CD8-positive, alpha-beta T cell (primary cell): ENCODE measurements at regions of chr17 and their contacts with region 1.

Region 1: DNA sequence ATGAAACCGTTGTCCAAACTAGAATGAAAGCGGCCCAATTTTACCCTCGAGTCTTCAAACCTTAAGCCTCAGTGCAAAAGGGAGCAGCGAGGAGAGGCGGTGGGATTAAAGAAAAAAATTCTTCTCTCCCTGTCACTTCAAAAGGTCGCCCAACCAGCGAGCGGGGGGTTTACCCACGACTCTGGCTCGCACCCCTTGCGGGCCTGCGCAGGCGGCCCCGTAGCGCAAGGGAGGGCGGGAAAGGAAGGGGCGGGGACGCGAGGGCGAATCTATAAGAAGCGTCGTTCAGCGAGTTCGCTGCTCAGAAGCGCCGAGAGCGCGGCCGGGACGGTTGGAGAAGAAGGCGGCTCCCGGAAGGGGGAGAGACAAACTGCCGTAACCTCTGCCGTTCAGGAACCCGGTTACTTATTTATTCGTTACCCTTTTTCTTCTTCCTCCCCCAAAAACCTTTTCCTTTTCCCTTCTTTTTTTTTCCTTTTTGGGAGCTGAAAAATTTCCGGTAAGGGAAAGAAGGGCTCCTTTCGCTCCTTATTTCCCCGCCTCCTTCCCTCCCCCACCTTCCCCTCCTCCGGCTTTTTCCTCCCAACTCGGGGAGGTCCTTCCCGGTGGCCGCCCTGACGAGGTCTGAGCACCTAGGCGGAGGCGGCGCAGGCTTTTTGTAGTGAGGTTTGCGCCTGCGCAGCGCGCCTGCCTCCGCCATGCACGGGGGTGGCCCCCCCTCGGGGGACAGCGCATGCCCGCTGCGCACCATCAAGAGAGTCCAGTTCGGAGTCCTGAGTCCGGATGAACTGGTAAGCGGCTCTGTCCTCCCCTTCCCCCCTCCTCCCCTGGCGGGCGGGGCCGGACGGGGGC is at the start of gene POLR2A:
- DNase-seq: peak; percentile 96 to 99 (median 98)
- ATAC-seq: peak; percentile 66
- H3K4me3 ChIP-seq: peak within 1 kb of the TSS; percentile 95 to 98
- H3K4me3 Mint-ChIP-seq: peak within 1 kb of the TSS; percentile 100
- H3K27ac ChIP-seq: peak within 1 kb of the TSS; percentile 99 to 100
- H3K27ac Mint-ChIP-seq: peak within 1 kb of the TSS; percentile 100
- H3K4me1 ChIP-seq: peaks cover 58% of the 10 kb centered on the region
- H3K4me1 Mint-ChIP-seq: peaks cover 74% of the 10 kb centered on the region
- H3K27me3 ChIP-seq: no peaks in the 10 kb centered on the region
- H3K27me3 Mint-ChIP-seq: no peaks in the 10 kb centered on the region
- CTCF ChIP-seq: no peak
- total RNA-seq, gene POLR2A: 508 to 546 TPM

Region 2: GRCh38 chr17:7239091-7240027 is 244.9 kb before region 1 on chr17 and contains the start of gene PHF23:
- CTCF ChIA-PET with region 1: no interaction called
- POLR2A ChIA-PET with region 1: interaction called, 10 read pairs
- intact Hi-C with region 1: loop called in 1 of 2 experiments (anchors 2 kb)
- DNase-seq: peak; percentile 93 to 99 (median 97)
- ATAC-seq: peak; percentile 64
- H3K4me3 ChIP-seq: peak within 1 kb of the TSS; percentile 87 to 90
- H3K4me3 Mint-ChIP-seq: peak within 1 kb of the TSS; percentile 98
- H3K27ac ChIP-seq: peak within 1 kb of the TSS; percentile 64 to 100
- H3K27ac Mint-ChIP-seq: peak within 1 kb of the TSS; percentile 90
- H3K4me1 ChIP-seq: peaks cover 37% of the 10 kb centered on the region
- H3K4me1 Mint-ChIP-seq: peaks cover 58% of the 10 kb centered on the region
- H3K27me3 ChIP-seq: no peaks in the 10 kb centered on the region
- H3K27me3 Mint-ChIP-seq: no peaks in the 10 kb centered on the region
- CTCF ChIP-seq: no peak
- total RNA-seq, gene PHF23: 2.8 to 3.1 TPM

Region 3: DNA sequence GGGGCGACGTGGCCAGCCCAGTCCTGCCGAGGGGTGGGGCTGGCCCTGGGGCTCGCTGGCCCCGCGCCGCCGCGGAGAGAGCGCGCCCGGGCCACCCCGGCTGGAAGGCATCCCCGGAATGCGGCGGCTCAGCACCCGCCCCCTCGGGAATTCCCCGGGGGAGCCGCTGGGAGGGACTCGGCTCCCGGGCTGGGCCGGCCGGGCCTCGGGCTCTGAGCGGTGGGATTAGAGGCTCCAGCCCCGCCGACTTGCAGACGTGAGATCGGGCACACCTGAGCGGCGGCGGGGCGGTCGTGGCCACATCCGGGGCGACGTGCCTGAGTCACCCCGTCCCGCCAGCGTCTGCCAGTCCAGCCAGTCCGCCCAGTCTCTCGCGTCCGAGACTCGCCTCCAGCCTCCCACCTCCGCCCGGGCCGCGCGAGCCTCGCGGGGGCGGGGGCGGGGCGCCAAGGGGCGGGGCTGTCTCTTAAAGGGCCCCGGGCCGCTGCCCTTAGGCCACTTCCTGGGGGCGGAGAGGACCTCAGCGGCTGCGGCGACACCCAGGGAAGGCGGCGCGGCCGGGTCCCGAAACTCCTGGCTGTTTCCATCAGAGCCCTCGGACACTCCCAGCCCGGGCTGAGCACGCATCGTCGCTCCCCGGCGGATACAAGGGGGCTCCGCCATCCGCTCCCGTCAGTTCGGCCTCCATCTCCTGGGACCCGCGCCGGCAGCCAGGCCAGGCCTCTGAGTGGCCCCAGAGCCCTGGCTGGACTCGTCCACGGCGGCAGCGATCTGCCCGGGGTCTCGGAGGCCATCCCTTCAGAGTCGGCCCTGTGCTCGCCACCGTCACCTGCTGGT is 132.4 kb before region 1 on chr17 and contains the start of gene KCTD11:
- CTCF ChIA-PET with region 1: interaction called, 12 read pairs
- POLR2A ChIA-PET with region 1: interaction called, 5 read pairs
- intact Hi-C with region 1: loop called (anchors 1 to 5 kb)
- DNase-seq: peak in 8 of 9 experiments; percentile 64 to 90 (median 80)
- ATAC-seq: peak; percentile 48
- H3K4me3 ChIP-seq: peak within 1 kb of the TSS; percentile 62 to 73
- H3K4me3 Mint-ChIP-seq: peak within 1 kb of the TSS; percentile 87
- H3K27ac ChIP-seq: peak within 1 kb of the TSS; percentile 53 to 87
- H3K27ac Mint-ChIP-seq: peak within 1 kb of the TSS; percentile 88
- H3K4me1 ChIP-seq: peaks cover 42% of the 10 kb centered on the region
- H3K4me1 Mint-ChIP-seq: peaks cover 38% of the 10 kb centered on the region
- H3K27me3 ChIP-seq: no peaks in the 10 kb centered on the region
- H3K27me3 Mint-ChIP-seq: no peaks in the 10 kb centered on the region
- CTCF ChIP-seq: peak; percentile 20
- total RNA-seq, gene KCTD11: 1.4 to 1.8 TPM

Region 4: DNA sequence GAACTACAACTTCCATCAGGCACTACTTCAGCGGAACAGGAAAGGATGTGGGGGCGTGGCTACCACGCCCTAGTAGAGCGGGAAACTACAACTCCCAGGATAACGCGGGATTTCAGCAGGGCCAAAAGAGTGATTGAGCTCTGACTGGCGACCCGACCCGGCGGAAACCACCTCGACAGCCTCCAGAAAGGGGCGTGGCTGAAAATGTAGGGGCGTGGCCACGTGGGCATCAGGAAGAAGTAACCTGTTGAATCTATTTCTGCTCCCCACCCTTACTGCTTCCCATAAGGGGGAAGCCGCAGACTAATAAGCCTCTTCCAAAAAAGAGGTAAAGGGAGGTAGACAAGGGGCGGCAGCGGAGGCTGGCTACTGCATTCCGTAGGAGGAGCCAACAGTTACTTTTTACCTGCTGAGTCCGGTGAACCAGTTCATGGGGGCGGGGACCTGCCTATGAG is 49.0 kb before region 1 on chr17 and contains the start of gene TMEM102:
- CTCF ChIA-PET with region 1: interaction called, 34 read pairs
- POLR2A ChIA-PET with region 1: interaction called, 86 read pairs
- intact Hi-C with region 1: loop called (anchors 1 kb)
- DNase-seq: peak; percentile 96 to 99 (median 98)
- ATAC-seq: peak; percentile 81
- H3K4me3 ChIP-seq: peak within 1 kb of the TSS; percentile 70 to 82
- H3K4me3 Mint-ChIP-seq: peak within 1 kb of the TSS; percentile 92
- H3K27ac ChIP-seq: peak within 1 kb of the TSS; percentile 66 to 90
- H3K27ac Mint-ChIP-seq: peak within 1 kb of the TSS; percentile 95
- H3K4me1 ChIP-seq: peaks cover 38% of the 10 kb centered on the region
- H3K4me1 Mint-ChIP-seq: peaks cover 38% of the 10 kb centered on the region
- H3K27me3 ChIP-seq: peaks cover 0 to 4% of the 10 kb centered on the region in 2 experiments
- H3K27me3 Mint-ChIP-seq: peaks cover 12% of the 10 kb centered on the region
- CTCF ChIP-seq: no peak
- total RNA-seq, gene TMEM102: 13.2 to 15.3 TPM

Region 5: DNA sequence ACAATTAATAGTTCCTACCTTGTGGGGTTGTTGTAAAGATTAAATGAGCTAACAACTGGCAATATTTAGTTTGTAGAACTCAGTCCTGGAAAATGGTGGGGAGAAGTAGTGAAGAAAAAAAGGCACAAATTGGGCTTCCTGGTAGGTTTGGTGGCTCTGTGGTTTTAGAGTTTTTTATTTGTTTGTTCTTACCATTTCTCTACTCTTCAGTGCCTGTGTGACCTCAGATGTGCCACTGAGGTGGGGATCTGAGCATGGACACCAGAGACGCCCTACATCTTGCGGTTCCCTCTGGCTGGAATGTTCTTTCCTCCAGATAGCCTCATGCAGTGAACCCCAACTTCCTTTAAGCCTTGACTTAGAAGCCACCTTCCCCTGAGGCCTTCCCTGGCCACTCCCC is 12.6 kb before region 1 on chr17:
- CTCF ChIA-PET with region 1: interaction called, 5 read pairs
- POLR2A ChIA-PET with region 1: interaction called, 12 read pairs
- intact Hi-C with region 1: no loop called
- DNase-seq: peak in 1 of 9 experiments; percentile 38
- ATAC-seq: peak; percentile 39
- H3K4me3 ChIP-seq: no peak overlapping the region
- H3K4me3 Mint-ChIP-seq: no peak overlapping the region
- H3K27ac ChIP-seq: peak overlapping the region in 1 of 2 experiments; percentile 40
- H3K27ac Mint-ChIP-seq: peak overlapping the region; percentile 80
- H3K4me1 ChIP-seq: peaks cover 38% of the 10 kb centered on the region
- H3K4me1 Mint-ChIP-seq: peaks cover 56% of the 10 kb centered on the region
- H3K27me3 ChIP-seq: no peaks in the 10 kb centered on the region
- H3K27me3 Mint-ChIP-seq: no peaks in the 10 kb centered on the region
- CTCF ChIP-seq: no peak

Region 6: DNA sequence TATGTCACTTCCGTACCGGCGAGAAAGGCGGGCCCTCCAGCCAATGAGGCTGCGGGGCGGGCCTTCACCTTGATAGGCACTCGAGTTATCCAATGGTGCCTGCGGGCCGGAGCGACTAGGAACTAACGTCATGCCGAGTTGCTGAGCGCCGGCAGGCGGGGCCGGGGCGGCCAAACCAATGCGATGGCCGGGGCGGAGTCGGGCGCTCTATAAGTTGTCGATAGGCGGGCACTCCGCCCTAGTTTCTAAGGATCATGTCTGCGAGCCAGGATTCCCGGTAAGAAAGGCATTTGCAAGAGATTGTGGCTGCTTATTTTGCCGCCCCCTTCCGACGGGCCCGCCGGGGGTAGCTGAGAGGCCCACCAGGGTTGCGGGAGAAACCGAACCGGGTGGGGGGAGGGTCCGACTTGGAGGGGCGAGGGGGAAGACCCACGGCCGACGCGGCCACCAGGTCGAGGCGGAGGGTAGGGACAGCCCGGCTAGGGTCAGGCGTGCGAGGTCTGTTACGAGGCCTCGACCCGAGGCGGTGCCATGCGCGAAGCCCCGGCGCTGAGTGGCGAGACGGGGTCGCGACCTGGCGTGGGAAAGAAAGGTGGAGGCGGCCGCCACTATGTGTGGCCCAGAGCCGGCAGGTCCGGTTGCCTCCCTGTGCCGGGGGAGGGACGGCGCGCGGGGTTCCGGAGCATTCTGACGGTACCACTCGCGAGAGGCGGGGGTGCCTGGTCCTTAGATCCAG is 88.5 kb after region 1 on chr17:
- CTCF ChIA-PET with region 1: no interaction called
- POLR2A ChIA-PET with region 1: interaction called, 9 read pairs
- intact Hi-C with region 1: loop called (anchors 1 kb)
- DNase-seq: peak in 8 of 9 experiments; percentile 99 to 100 (median 100)
- ATAC-seq: peak; percentile 83
- H3K4me3 ChIP-seq: peak overlapping the region; percentile 97 to 100
- H3K4me3 Mint-ChIP-seq: peak overlapping the region; percentile 99
- H3K27ac ChIP-seq: peak overlapping the region; percentile 98 to 99
- H3K27ac Mint-ChIP-seq: peak overlapping the region; percentile 96
- H3K4me1 ChIP-seq: peaks cover 28% of the 10 kb centered on the region
- H3K4me1 Mint-ChIP-seq: peaks cover 48% of the 10 kb centered on the region
- H3K27me3 ChIP-seq: no peaks in the 10 kb centered on the region
- H3K27me3 Mint-ChIP-seq: no peaks in the 10 kb centered on the region
- CTCF ChIP-seq: no peak

Region 7: GRCh38 chr17:7969433-7969832 is 485.1 kb after region 1 on chr17:
- CTCF ChIA-PET with region 1: no interaction called
- POLR2A ChIA-PET with region 1: no interaction called
- intact Hi-C with region 1: no loop called
- DNase-seq: no peak
- ATAC-seq: no peak
- H3K4me3 ChIP-seq: no peak overlapping the region
- H3K4me3 Mint-ChIP-seq: no peak overlapping the region
- H3K27ac ChIP-seq: no peak overlapping the region
- H3K27ac Mint-ChIP-seq: no peak overlapping the region
- H3K4me1 ChIP-seq: no peaks in the 10 kb centered on the region
- H3K4me1 Mint-ChIP-seq: no peaks in the 10 kb centered on the region
- H3K27me3 ChIP-seq: peaks cover 0 to 6% of the 10 kb centered on the region in 2 experiments
- H3K27me3 Mint-ChIP-seq: peaks cover 4% of the 10 kb centered on the region
- CTCF ChIP-seq: no peak